ENCODE measurements at regions of chr18 and their contacts with region 1.

Region 1: DNA sequence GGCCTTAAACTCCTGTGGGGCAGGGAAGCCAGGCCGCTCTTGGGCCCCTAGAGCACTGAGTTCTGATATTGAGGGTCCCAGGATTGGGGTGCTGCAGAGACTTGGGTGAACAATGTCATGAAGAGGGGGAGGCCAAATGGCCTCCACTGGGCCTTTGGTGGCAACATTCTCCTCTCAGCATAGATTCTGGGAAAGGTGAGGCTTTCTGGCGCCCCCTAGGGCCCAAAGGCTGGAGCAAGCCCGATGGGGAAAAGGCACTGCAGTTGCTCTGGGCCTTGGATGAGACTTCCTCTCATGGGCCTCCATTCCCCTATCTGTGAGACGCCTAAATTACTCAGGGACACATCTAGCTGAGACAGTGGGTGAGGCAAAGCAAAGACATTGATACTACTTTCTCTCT is 84.8 kb downstream of the ACAA2 start:
- DNase-seq: peak; percentile 81
- H3K4me3 Mint-ChIP-seq: no peak overlapping the region
- H3K27ac Mint-ChIP-seq: no peak overlapping the region
- H3K4me1 Mint-ChIP-seq: peaks cover 6% of the 10 kb centered on the region
- H3K27me3 Mint-ChIP-seq: peaks cover 13% of the 10 kb centered on the region

Region 2: DNA sequence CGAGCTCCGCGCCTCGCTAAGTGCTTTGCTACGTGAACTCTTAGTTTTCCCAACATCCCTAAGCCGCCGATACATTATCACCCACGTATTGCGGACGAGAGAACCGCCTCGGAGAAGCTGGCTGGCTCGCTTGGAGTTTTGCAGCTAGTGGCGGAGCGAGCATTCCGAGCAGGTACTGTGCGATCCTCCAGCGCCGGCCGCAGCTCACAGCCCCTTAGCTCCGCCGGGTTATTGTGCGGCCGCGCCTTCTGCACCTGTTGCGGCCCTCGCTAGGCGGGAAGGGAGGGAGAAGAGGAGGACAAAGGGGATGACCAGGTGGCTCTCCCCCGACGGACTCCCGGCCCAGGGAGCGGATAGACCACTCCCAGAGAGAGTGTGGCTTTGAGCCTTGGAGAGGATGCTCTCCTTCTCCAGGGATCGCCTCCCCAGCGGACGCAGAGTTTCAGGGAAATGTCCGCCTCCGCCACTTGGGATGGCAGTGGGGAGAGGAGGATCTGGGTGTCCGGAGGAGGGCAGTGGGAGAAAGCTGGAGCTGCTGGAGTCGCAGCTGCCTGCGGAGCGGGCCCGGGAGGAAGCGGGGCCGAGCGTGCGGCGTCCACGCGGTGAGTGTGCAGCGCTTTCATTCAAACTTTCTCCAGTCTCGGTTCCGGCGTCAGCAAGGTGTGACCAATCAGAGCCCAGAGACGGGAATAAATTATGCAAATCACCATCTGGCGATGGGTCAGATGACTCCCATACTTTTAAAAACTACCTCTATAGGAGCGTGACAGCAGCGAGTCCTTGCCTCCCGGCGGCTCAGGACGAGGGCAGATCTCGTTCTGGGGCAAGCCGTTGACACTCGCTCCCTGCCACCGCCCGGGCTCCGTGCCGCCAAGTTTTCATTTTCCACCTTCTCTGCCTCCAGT is 167.0 kb before region 1 on chr18 and contains the start of gene LIPG:
- intact Hi-C with region 1: loop called (anchors 10 kb)
- DNase-seq: peak; percentile 85
- H3K4me3 Mint-ChIP-seq: peak within 1 kb of the TSS; percentile 73
- H3K27ac Mint-ChIP-seq: no peak within 1 kb of the TSS
- H3K4me1 Mint-ChIP-seq: peaks cover 31% of the 10 kb centered on the region
- H3K27me3 Mint-ChIP-seq: peaks cover 78% of the 10 kb centered on the region
- total RNA-seq, gene LIPG: 0.57 and 0.82 TPM in 2 replicates

Region 3: DNA sequence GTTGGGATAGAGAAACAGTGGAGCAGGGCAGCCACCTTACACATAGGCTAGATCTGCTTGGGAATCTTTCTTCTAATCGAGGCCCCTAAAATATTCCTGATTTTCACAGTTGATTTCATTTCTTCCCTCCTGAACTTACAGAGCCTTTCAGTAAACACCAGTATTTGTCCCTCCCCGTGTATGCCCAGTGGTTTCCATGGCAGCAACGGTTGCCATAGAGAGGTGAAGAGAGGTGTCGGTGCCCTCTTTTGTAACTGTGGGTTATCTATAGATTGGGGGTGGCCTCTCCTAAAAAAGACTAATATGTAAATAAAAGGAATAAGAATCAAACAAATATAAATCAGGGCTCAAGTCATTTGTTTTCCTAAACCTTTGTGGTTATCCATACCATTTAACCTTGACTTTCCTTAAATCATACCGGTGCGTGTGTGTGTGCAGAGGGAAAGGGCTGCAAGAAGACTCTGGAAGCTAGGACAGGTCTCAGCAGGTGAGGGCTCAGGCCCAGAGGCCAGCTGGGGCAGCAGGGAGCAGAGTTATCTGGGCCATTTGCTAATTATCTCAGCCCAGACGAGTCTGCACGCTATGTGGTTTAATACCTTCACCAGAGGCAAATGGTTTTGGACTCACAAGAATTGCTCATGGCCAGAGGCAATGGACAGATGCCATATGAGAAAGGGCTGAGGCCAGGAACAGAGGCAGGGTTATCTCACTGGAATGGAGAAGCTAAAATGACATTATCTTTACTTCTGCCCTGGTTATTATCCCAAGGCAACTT is 131.2 kb before region 1 on chr18:
- intact Hi-C with region 1: no loop called
- DNase-seq: no peak
- H3K4me3 Mint-ChIP-seq: no peak overlapping the region
- H3K27ac Mint-ChIP-seq: no peak overlapping the region
- H3K4me1 Mint-ChIP-seq: peaks cover 5% of the 10 kb centered on the region
- H3K27me3 Mint-ChIP-seq: peaks cover 5% of the 10 kb centered on the region

Region 4: GRCh38 chr18:49768051-49768391 is 39.5 kb after region 1 on chr18:
- intact Hi-C with region 1: no loop called
- DNase-seq: no peak
- H3K4me3 Mint-ChIP-seq: no peak overlapping the region
- H3K27ac Mint-ChIP-seq: no peak overlapping the region
- H3K4me1 Mint-ChIP-seq: no peaks in the 10 kb centered on the region
- H3K27me3 Mint-ChIP-seq: peaks cover 8% of the 10 kb centered on the region

Region 5: DNA sequence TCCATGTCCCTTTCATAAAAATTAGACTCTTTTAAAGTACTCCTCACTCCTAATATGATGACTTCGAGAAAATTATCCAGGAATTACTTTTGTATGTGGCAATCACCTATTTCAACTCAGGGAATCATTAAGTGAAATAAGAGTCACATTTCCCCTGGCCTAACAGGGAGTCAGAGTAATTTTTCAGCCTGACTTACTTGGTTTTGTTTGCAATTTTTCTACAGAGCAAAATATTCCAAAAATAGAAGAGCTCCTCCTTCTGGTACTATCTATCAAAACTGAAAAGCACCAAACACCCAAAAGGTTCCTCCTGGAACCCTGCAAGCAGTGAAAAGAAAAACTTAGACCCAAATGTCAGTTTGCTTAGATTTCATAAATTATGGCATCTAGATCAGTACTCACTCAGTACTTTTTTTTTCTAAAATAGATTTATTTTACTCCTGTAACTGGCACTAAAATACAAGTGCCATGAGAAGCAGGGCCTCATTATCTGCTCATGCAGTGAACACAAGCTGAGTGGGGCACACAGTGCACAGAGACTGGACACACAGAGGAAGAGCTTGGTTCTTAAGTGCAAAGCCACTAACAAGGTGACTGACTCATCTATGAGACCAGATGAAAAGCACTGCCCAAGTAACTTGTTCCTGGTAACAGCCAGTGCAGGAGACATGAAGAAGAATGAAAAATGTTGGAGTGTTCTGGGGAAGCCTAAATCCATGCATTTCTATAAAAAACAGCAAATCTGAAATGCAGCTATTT is 56.1 kb after region 1 on chr18:
- intact Hi-C with region 1: loop called (anchors 10 kb)
- DNase-seq: no peak
- H3K4me3 Mint-ChIP-seq: no peak overlapping the region
- H3K27ac Mint-ChIP-seq: no peak overlapping the region
- H3K4me1 Mint-ChIP-seq: peaks cover 27% of the 10 kb centered on the region
- H3K27me3 Mint-ChIP-seq: no peaks in the 10 kb centered on the region

Region 6: DNA sequence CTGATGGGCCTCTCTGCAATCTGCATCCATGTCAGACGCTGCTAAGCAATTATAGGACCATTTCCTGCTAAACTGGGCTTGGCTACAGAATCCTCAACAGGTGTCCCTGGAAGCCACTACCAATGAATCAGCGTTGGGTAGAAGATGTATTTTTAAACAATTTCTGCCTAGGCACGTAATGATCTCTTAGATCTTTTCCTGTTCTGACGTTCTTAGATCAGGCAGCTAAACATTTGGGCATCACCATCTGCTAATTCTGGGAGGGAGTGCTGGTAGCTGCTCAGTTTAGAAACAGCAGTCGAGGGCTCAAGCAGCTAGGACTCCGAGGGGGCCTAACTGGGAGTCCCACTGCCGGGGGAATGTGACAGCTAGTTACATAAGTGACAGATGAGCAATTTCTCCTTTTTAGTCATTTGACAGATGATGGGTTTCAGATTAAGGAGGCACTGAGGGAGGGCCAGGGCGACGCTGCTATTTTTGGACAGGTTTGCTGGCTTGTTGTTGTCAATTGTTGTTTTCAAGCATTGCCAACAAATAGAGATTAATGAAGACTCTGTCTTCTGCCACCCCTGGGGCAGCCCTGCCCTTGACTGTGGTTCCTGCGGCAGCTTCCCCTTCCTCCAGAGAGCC is 998.5 kb after region 1 on chr18:
- intact Hi-C with region 1: no loop called
- DNase-seq: no peak
- H3K4me3 Mint-ChIP-seq: no peak overlapping the region
- H3K27ac Mint-ChIP-seq: no peak overlapping the region
- H3K4me1 Mint-ChIP-seq: no peaks in the 10 kb centered on the region
- H3K27me3 Mint-ChIP-seq: no peaks in the 10 kb centered on the region

Measured in activated CD4-positive, alpha-beta T cell treated with anti-CD3 and anti-CD28 coated beads, Interleukin-2, amount 10 ng/mL, durations not matched to agents 24 days and 14 days (primary cell).